ENCODE measurements at regions of chr1 and their contacts with region 1.

Region 1: GRCh38 chr1:61851849-61852669 is 109.8 kb downstream of the PATJ start:
- DNase-seq: no peak
- ATAC-seq: no peak
- H3K4me3 Mint-ChIP-seq: no peak overlapping the region
- H3K27ac Mint-ChIP-seq: no peak overlapping the region
- H3K4me1 Mint-ChIP-seq: no peaks in the 10 kb centered on the region
- H3K27me3 Mint-ChIP-seq: no peaks in the 10 kb centered on the region
- CTCF ChIP-seq: peak; percentile 75

Region 2: GRCh38 chr1:60281360-60281932 is 1570.6 kb before region 1 on chr1:
- CTCF ChIA-PET with region 1: interaction called, 3 read pairs
- POLR2A ChIA-PET with region 1: no interaction called
- intact Hi-C with region 1: loop called (anchors 10 kb)
- DNase-seq: no peak
- ATAC-seq: no peak
- H3K4me3 Mint-ChIP-seq: no peak overlapping the region
- H3K27ac Mint-ChIP-seq: no peak overlapping the region
- H3K4me1 Mint-ChIP-seq: no peaks in the 10 kb centered on the region
- H3K27me3 Mint-ChIP-seq: no peaks in the 10 kb centered on the region
- CTCF ChIP-seq: no peak

Region 3: GRCh38 chr1:60848583-60849188 is 1003.4 kb before region 1 on chr1:
- CTCF ChIA-PET with region 1: no interaction called
- POLR2A ChIA-PET with region 1: no interaction called
- intact Hi-C with region 1: loop called (anchors 2 kb)
- DNase-seq: no peak
- ATAC-seq: no peak
- H3K4me3 Mint-ChIP-seq: no peak overlapping the region
- H3K27ac Mint-ChIP-seq: no peak overlapping the region
- H3K4me1 Mint-ChIP-seq: no peaks in the 10 kb centered on the region
- H3K27me3 Mint-ChIP-seq: no peaks in the 10 kb centered on the region
- CTCF ChIP-seq: no peak

Region 4: DNA sequence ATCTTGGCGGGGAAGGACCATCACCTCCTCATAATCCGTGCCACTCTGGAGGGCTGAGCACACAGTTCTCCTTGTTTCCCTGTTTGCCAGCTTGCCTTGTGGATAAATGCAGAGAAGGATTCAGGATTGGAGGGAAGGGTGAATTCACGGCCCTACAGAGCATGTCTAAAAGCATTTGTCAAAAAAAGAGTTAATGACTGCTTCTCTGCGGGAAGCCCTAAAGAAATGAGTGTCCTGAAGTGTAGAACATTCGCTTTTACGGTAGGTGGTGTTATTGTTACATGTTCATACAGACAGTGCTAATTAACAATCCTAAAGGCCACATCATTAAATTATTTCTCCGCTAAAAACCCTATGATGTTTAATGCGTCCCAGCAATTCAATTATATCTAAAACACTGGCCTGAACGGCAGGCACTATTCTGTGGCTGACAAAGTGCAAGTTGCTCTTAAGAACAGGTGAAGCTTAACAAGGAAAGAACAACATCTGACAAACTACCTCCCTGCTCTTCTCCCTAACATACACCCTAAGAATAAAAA is 882.0 kb before region 1 on chr1:
- CTCF ChIA-PET with region 1: no interaction called
- POLR2A ChIA-PET with region 1: no interaction called
- intact Hi-C with region 1: loop called (anchors 5 kb)
- DNase-seq: no peak
- ATAC-seq: no peak
- H3K4me3 Mint-ChIP-seq: no peak overlapping the region
- H3K27ac Mint-ChIP-seq: no peak overlapping the region
- H3K4me1 Mint-ChIP-seq: no peaks in the 10 kb centered on the region
- H3K27me3 Mint-ChIP-seq: peaks cover 3% of the 10 kb centered on the region
- CTCF ChIP-seq: no peak

Region 5: GRCh38 chr1:61049850-61050540 is 802.1 kb before region 1 on chr1:
- CTCF ChIA-PET with region 1: interaction called, 9 read pairs
- POLR2A ChIA-PET with region 1: no interaction called
- intact Hi-C with region 1: loop called (anchors 1 kb)
- DNase-seq: peak; percentile 82
- ATAC-seq: peak; percentile 87
- H3K4me3 Mint-ChIP-seq: peak overlapping the region; percentile 82
- H3K27ac Mint-ChIP-seq: no peak overlapping the region
- H3K4me1 Mint-ChIP-seq: peaks cover 29% of the 10 kb centered on the region
- H3K27me3 Mint-ChIP-seq: peaks cover 54% of the 10 kb centered on the region
- CTCF ChIP-seq: peak; percentile 36

Region 6: GRCh38 chr1:61588736-61589672 is 263.1 kb before region 1 on chr1:
- CTCF ChIA-PET with region 1: no interaction called
- POLR2A ChIA-PET with region 1: no interaction called
- intact Hi-C with region 1: loop called (anchors 1 kb)
- DNase-seq: no peak
- ATAC-seq: peak; percentile 37
- H3K4me3 Mint-ChIP-seq: no peak overlapping the region
- H3K27ac Mint-ChIP-seq: no peak overlapping the region
- H3K4me1 Mint-ChIP-seq: no peaks in the 10 kb centered on the region
- H3K27me3 Mint-ChIP-seq: peaks cover 2% of the 10 kb centered on the region
- CTCF ChIP-seq: peak; percentile 71

Measured in activated B cell treated with CpG ODN at 0.5 μM for 24 hours (primary cell).